ENCODE measurements at regions of chr2 and their contacts with region 1.

Region 1: DNA sequence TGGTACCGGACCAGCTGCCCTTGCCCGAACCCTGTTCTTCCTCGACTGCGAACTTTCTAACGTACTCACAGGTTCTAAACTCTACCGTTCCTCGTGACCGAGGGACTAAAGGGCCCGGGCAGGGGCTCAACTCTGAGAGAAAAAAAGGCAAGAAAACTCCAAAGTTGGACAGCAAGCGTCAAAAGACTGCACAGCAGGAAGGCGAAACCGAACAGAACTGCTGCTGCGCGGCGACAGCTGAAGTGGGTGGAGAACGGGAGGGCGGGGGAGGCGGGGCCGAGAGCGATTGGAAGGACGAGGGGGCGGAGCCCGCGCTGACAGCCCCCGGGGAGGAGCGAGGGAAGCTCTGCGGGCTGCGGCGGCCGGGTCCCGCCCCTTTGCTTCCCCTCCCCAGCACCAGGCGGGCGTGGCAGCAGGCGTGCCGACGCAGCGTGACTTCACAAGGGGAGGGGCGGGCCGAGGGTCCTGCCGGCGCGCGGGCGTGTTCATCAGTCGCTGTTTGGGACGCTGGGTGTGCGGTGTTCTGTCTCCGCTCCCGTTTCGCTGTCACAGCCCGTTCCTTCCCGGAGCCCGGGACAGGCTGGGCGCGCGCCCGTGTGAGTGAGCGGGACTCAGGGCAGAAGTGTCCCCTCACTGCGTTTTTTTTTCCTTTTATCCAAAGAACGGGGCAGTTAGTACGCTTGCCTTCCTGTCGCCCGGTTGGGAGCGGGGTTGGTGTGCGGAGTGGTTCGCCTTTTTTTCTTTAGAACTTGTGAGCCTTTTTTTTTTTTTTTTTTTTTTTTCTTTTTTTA is at the start of gene NABP1:
- H3K4me3 ChIP-seq: peak within 1 kb of the TSS; percentile 70
- H3K27ac ChIP-seq: peak within 1 kb of the TSS; percentile 71
- H3K4me1 ChIP-seq: peaks cover 6% of the 10 kb centered on the region; the same call in 1 of the 2 replicates
- CTCF ChIP-seq: 0 out of 2 replicates have a peak, but pooled peaks have one; percentile 7

Region 2: DNA sequence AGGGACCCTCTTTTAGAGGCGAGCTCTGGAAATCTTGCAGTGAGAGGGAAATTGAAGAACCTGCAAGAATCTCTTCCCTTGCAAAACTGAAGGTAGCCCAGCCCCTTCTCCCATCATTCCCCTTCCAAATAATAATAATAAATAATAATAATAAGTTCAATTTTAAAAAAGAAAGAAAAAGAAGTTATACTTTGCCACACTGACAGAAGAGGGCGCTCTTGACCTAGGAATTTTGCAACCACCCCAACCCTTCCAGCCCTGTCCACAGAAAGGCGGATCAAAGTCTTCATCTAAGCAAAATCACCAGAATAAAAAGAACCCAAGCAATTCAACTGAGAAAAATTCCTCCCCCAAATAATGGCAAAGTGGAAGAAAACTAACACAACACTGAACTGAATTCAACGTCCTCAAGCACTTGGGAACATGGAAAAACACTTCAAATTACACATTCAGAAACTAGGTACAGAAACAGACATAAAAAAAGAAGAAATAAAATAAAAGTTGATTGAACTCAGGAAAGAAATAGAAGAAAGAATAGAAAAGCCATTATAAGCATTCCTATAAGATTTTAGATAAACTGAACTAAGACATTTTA is 896.1 kb before region 1 on chr2:
- CTCF ChIA-PET with region 1: no interaction called
- POLR2A ChIA-PET with region 1: no interaction called
- H3K4me3 ChIP-seq: no peak overlapping the region
- H3K27ac ChIP-seq: no peak overlapping the region
- H3K4me1 ChIP-seq: peaks cover 2% of the 10 kb centered on the region; the same call in 1 of the 2 replicates
- CTCF ChIP-seq: no peak

Region 3: GRCh38 chr2:191566344-191566743 is 111.5 kb before region 1 on chr2:
- CTCF ChIA-PET with region 1: interaction called, 8 read pairs
- POLR2A ChIA-PET with region 1: interaction called, 10 read pairs
- H3K4me3 ChIP-seq: no peak overlapping the region
- H3K27ac ChIP-seq: no peak overlapping the region
- H3K4me1 ChIP-seq: no peaks in the 10 kb centered on the region; the same call in 1 of the 2 replicates
- CTCF ChIP-seq: peak; percentile 38; the same call in 1 of the 2 replicates

Region 4: DNA sequence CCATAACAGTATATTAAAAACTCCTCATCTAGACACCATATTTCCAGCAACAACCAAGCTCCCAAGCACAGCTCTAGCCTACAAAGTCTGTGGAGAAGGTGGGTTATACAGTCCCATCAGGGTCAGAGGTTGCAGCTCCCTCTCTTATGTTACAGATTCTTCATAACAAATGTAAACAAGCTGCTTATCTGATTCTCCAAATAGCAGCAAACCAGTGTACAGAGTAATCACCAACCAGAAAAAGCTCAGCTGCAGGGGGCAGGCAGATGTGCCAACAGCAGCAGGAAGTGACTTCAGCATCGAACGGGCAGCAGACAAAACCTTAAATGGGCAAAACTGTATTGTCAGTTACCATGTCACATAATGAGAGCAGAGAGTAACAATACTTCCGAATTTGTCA is 52.8 kb before region 1 on chr2:
- CTCF ChIA-PET with region 1: no interaction called
- POLR2A ChIA-PET with region 1: interaction called, 16 read pairs
- H3K4me3 ChIP-seq: no peak overlapping the region
- H3K27ac ChIP-seq: no peak overlapping the region
- H3K4me1 ChIP-seq: no peaks in the 10 kb centered on the region; the same call in 1 of the 2 replicates
- CTCF ChIP-seq: no peak

Region 5: GRCh38 chr2:191637182-191638078 is 40.4 kb before region 1 on chr2:
- CTCF ChIA-PET with region 1: interaction called, 3 read pairs
- POLR2A ChIA-PET with region 1: interaction called, 21 read pairs
- H3K4me3 ChIP-seq: no peak overlapping the region
- H3K27ac ChIP-seq: no peak overlapping the region
- H3K4me1 ChIP-seq: peaks cover 10% of the 10 kb centered on the region; the same call in 1 of the 2 replicates
- CTCF ChIP-seq: no peak

Region 6: DNA sequence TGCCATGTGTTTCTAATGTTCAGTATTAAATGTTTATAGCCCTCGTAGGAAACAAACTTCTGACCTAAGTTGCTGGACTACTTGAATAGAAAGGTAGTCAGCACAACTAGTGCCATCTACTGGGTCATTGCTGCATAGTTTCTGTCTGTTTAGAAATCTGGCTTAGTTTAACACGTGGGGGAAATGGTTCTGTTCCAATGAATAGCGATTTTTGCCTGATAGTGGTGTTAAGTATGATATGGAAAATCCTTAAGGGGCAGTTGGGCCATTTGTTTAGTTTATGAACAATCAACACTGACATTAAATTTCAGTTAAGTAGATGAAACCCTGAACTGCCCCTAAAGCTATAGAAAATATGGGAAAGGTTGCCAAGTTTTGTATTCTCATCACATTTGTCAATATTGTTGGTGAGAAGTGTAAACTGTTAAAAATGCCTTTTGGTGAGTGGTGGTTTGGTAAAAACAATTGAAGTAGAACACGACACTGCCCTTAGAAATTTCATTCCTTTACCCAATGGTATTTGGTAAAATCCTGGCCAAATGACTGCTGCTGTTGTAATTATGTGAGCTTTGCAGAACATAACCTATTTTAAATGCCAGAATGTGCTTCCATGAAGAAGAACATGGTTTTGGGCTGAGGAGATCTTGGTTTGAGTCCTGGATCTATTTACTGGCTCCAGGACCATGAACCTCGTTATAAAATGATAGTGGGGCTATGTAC is 13.3 kb after region 1 on chr2:
- CTCF ChIA-PET with region 1: interaction called, 10 read pairs
- POLR2A ChIA-PET with region 1: interaction called, 11 read pairs
- H3K4me3 ChIP-seq: no peak overlapping the region
- H3K27ac ChIP-seq: no peak overlapping the region
- H3K4me1 ChIP-seq: peaks cover 7% of the 10 kb centered on the region
- CTCF ChIP-seq: peak; percentile 61

Region 7: DNA sequence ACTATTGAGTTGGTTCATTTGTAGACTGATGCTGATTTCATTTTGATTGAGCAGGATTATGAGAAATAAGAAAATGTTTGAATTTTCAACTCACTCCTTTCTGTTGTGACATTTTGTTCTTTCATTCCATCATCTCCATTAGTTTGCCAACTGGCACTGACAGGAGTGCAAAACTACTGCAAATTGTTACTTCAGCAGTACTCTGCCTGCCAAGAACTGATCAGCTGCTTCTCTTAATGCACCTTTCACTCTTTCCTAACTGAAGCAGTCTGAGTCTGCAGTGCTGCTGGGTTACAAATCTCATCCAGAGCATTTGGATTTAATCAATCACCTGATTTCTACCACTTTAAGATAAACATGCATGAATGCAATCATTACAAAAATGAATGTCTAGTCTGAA is 446.0 kb after region 1 on chr2:
- CTCF ChIA-PET with region 1: no interaction called
- POLR2A ChIA-PET with region 1: no interaction called
- H3K4me3 ChIP-seq: no peak overlapping the region
- H3K27ac ChIP-seq: no peak overlapping the region
- H3K4me1 ChIP-seq: no peaks in the 10 kb centered on the region
- CTCF ChIP-seq: no peak